A673 (cell line): ENCODE measurements at regions of chrX and their contacts with region 1.

Region 1: GRCh38 chrX:19174401-19175025 is 52.2 kb upstream of the ADGRG2 start:
- DNase-seq: peak; percentile 74
- H3K4me3 ChIP-seq: no peak overlapping the region
- H3K27ac ChIP-seq: peak overlapping the region; percentile 96
- H3K4me1 ChIP-seq: peaks cover 64% of the 10 kb centered on the region
- H3K27me3 ChIP-seq: no peaks in the 10 kb centered on the region
- CTCF ChIP-seq: no peak

Region 2: GRCh38 chrX:17869580-17869979 is 1304.9 kb before region 1 on chrX:
- CTCF ChIA-PET with region 1: no interaction called
- POLR2A ChIA-PET with region 1: no interaction called
- intact Hi-C with region 1: no loop called
- DNase-seq: no peak
- H3K4me3 ChIP-seq: no peak overlapping the region
- H3K27ac ChIP-seq: no peak overlapping the region
- H3K4me1 ChIP-seq: no peaks in the 10 kb centered on the region
- H3K27me3 ChIP-seq: peaks cover 25% of the 10 kb centered on the region
- CTCF ChIP-seq: no peak

Region 3: DNA sequence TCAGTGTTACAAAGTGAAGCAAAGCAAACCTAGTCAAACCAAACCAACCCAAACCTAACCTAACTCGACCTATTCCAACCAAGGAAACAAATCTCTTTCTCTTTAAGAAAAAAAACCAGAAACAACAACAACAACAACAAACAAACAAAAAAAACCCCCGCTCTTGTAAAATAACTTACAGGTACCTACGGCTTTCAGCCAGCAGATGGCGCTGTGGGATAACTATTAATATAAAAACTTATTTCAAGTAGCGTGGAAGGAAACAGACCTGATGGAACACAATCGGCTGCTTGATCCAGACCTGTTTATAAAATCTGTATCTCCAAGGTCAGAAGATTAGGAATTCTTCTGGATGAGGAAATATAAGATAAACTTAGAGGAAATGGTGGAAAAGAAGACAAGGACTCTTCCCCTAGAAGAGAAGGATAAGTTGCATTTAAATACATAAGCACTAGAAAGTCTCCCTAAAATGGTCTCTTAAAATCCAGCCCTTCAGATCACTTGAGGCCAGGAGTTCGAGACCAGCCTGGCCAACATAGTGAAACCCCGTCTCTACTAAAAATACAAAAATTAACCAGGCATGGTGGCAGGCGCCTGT is 783.5 kb before region 1 on chrX:
- CTCF ChIA-PET with region 1: no interaction called
- POLR2A ChIA-PET with region 1: no interaction called
- intact Hi-C with region 1: loop called (anchors 5 kb)
- DNase-seq: peak; percentile 79
- H3K4me3 ChIP-seq: no peak overlapping the region
- H3K27ac ChIP-seq: no peak overlapping the region
- H3K4me1 ChIP-seq: peaks cover 4% of the 10 kb centered on the region
- H3K27me3 ChIP-seq: no peaks in the 10 kb centered on the region
- CTCF ChIP-seq: peak; percentile 90

Region 4: DNA sequence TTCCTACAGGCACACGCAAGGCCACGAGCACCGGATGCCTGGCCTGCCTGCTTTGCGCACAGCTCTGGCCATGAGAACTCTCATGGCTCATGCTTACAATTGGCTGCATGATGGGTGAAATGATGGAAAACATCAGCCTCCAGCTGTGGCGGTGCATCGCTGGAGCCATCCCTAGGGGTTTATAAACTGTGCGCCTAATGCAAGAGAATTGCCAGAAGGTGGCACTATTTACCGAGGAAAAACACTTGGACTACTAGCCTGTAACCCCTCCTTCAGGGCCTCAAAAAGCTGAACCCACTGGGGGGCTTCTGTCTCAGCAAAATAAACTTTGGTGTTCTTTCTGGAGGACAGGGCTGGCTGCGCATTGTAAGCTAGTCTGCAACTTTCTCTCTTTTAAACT is 242.5 kb before region 1 on chrX:
- CTCF ChIA-PET with region 1: interaction called, 5 read pairs
- POLR2A ChIA-PET with region 1: no interaction called
- intact Hi-C with region 1: loop called (anchors 1 kb)
- DNase-seq: peak; percentile 90
- H3K4me3 ChIP-seq: no peak overlapping the region
- H3K27ac ChIP-seq: no peak overlapping the region
- H3K4me1 ChIP-seq: peaks cover 15% of the 10 kb centered on the region
- H3K27me3 ChIP-seq: no peaks in the 10 kb centered on the region
- CTCF ChIP-seq: peak; percentile 81

Region 5: DNA sequence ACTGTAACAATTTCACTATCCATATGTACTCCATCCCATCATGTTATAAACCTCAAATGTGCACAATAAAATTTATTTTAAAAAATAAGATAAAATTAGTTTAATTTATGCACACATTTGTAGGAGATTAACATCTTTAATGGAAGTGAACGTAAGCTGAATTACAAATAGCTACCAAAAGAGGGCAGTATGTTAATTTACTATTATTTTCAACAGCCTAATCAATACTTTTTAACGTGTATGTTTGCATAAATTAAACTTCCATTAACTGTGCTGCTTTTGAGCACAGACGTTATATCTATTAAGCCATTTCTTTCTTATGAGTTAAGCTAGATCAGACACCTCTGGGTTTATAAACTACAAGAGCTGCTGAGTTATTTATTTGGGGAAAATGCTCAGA is 134.1 kb before region 1 on chrX:
- CTCF ChIA-PET with region 1: interaction called, 4 read pairs
- POLR2A ChIA-PET with region 1: no interaction called
- intact Hi-C with region 1: loop called (anchors 2 kb)
- DNase-seq: peak; percentile 23
- H3K4me3 ChIP-seq: no peak overlapping the region
- H3K27ac ChIP-seq: no peak overlapping the region
- H3K4me1 ChIP-seq: peaks cover 19% of the 10 kb centered on the region
- H3K27me3 ChIP-seq: no peaks in the 10 kb centered on the region
- CTCF ChIP-seq: peak; percentile 62; the same call in 1 of the 2 replicates

Region 6: DNA sequence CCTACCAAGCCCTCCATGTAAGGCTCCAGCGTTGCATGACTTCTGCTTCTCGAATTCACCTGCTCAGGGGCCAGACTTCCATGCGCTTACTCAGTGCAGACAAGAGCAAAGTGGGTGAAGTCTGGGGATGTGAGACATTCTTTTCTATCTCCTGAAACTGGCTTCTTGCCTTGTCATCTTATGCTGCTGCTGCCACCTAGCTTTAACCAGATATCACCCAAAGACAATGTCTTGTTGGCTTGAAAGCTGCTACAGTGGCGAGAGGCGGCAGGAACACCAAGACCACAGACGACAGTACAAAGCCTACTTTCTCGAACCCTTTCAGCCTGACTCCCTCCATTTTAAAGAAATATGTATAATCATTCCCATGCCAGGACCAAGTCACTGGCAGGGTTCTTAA is 51.4 kb after region 1 on chrX:
- CTCF ChIA-PET with region 1: no interaction called
- POLR2A ChIA-PET with region 1: no interaction called
- intact Hi-C with region 1: loop called (anchors 5 kb)
- DNase-seq: peak; percentile 88
- H3K4me3 ChIP-seq: no peak overlapping the region
- H3K27ac ChIP-seq: peak overlapping the region; percentile 67
- H3K4me1 ChIP-seq: peaks cover 19% of the 10 kb centered on the region
- H3K27me3 ChIP-seq: no peaks in the 10 kb centered on the region
- CTCF ChIP-seq: peak; percentile 74